ENCODE measurements at regions of chr10 and their contacts with region 1.

Region 1: DNA sequence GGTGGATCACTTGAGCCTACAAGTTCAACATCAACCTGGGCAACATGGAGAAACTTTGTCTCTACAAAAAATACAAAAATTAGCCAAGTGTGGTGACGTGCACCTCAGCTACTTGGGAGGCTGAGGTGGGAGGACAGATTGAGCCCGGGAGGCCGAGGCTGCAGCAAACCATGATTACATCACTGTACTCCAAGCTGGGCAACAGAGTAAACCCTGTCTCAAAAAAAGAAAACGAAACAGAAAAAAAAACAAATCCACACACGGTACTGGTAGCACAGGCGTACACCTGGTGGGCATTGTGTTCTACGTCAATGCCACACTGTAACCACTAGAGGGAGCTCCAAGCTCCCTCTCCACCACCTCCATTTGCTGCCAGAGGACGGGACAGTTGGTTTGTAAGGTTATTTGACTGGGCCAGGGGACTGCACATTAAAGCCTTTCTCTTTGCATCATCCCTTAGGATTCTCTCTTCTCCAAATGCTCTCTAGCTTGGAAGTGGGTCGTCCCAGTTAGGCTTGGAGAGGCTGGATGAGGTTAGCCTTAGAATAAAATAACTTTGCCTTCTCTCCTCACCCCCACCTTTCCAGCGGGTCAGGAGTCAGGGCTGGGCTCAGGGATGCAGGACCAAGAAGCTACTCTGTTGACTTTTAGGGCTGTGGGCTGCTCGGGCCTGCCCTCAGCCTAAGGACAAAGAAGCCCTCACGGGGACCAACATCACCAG is 130.8 kb downstream of the SORBS1 start:
- DNase-seq: peak; percentile 30
- ATAC-seq: peak; percentile 93
- H3K4me3 ChIP-seq: no peak overlapping the region
- H3K27ac ChIP-seq: no peak overlapping the region
- H3K4me1 ChIP-seq: peaks cover 7% of the 10 kb centered on the region
- H3K27me3 ChIP-seq: no peaks in the 10 kb centered on the region; a peak in 1 of 4 replicates
- CTCF ChIP-seq: peak; percentile 93 to 96 (median 93)
- EP300 ChIP-seq: no peak
- POLR2A ChIP-seq: no peak
- RAD21 ChIP-seq: peak; percentile 88

Region 2: DNA sequence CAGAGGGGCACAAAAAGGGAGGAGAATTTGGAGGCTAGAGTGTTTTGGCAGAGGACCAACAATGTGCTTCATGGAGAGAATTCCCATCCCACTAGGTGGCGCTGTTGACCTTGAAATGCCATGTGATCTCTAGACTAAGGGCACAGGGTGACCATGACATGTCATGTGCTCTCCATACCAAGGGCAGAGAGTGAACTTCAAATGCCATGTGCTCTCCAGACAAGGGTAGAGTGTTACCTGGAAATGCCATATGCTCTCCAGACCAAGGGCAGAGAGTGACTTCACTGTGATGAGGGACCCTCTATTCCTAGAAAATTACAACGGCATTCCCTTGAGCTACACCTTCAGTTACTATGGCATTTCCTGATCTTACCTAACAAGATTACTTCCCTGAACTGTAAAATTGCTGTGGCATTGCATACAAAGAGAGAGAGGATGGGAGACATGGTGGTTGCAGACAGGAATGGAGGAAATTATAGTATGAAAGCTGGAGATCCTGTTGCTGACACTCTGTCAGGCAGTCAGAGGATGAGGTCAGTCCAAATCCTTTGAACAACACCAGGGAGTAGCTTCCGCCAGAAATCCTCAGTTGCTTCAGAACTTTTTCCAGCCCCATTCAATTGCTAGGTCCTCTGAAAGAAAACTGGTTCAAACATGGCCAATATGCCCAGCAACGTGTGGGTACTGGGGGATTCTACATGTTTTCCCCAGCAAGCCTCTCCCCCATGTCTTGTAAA is 297.2 kb before region 1 on chr10:
- CTCF ChIA-PET with region 1: interaction called, 4 read pairs
- POLR2A ChIA-PET with region 1: no interaction called
- RAD21 ChIA-PET with region 1: no interaction called
- SMC1A ChIA-PET with region 1: no interaction called
- in situ Hi-C with region 1: no loop called
- intact Hi-C with region 1: loop called (anchors 1 kb)
- DNase-seq: peak; percentile 45
- ATAC-seq: peak; percentile 99
- H3K4me3 ChIP-seq: no peak overlapping the region
- H3K27ac ChIP-seq: no peak overlapping the region
- H3K4me1 ChIP-seq: no peaks in the 10 kb centered on the region
- H3K27me3 ChIP-seq: no peaks in the 10 kb centered on the region
- CTCF ChIP-seq: peak; percentile 71 to 83 (median 79)
- EP300 ChIP-seq: no peak
- POLR2A ChIP-seq: no peak
- RAD21 ChIP-seq: peak; percentile 86

Region 3: DNA sequence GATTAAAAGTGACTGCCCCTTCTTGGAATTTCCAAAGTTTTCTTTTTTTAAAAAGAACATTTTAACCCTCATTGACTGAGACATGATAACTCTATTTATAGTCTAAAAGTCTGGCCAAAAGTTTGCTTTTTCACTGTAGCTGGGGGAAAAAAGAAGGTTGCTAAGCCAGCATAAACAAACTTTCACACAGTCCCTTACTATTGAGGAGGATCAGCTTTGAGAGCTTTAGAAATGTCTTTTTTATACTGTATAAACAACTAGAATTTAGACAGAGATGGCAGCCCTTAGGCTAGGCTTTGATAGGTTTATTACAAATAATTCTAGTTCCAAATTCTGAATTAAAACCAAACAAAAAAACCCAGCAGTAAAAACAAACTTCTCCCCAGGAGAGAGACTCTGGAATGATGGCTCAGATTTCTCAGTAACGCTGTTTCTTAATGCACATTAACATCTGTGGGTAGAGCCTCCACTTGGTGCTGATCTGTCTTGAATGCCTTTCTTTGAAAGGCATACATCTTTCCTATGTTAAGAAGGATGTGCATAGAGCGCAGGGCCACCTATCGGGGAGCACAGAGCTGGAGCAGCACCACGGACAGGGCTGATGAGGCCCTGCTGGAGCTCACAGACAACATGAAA is 38.7 kb before region 1 on chr10:
- CTCF ChIA-PET with region 1: interaction called, 18 read pairs
- POLR2A ChIA-PET with region 1: interaction called, 6 read pairs
- RAD21 ChIA-PET with region 1: interaction called, 6 read pairs
- SMC1A ChIA-PET with region 1: interaction called, 6 read pairs
- in situ Hi-C with region 1: no loop called
- intact Hi-C with region 1: no loop called
- DNase-seq: no peak
- ATAC-seq: peak; percentile 32
- H3K4me3 ChIP-seq: no peak overlapping the region
- H3K27ac ChIP-seq: no peak overlapping the region
- H3K4me1 ChIP-seq: peaks cover 51% of the 10 kb centered on the region
- H3K27me3 ChIP-seq: no peaks in the 10 kb centered on the region
- CTCF ChIP-seq: peak in 2 of 3 experiments; percentile 3 to 18; a peak in 1 of 6 replicates
- EP300 ChIP-seq: no peak
- POLR2A ChIP-seq: no peak
- RAD21 ChIP-seq: no peak

Region 4: GRCh38 chr10:95406651-95407280 is 23.6 kb before region 1 on chr10:
- CTCF ChIA-PET with region 1: interaction called, 19 read pairs
- POLR2A ChIA-PET with region 1: interaction called, 5 read pairs
- RAD21 ChIA-PET with region 1: interaction called, 3 read pairs
- SMC1A ChIA-PET with region 1: interaction called, 4 read pairs
- in situ Hi-C with region 1: no loop called
- intact Hi-C with region 1: no loop called
- DNase-seq: no peak
- ATAC-seq: no peak
- H3K4me3 ChIP-seq: no peak overlapping the region
- H3K27ac ChIP-seq: no peak overlapping the region
- H3K4me1 ChIP-seq: no peaks in the 10 kb centered on the region
- H3K27me3 ChIP-seq: no peaks in the 10 kb centered on the region; a peak in 1 of 4 replicates
- CTCF ChIP-seq: no peak
- EP300 ChIP-seq: no peak
- POLR2A ChIP-seq: no peak
- RAD21 ChIP-seq: no peak

Region 5: GRCh38 chr10:95445837-95446486 is 15.6 kb after region 1 on chr10:
- CTCF ChIA-PET with region 1: interaction called, 147 read pairs
- POLR2A ChIA-PET with region 1: no interaction called
- RAD21 ChIA-PET with region 1: interaction called, 22 read pairs
- SMC1A ChIA-PET with region 1: interaction called, 70 read pairs
- in situ Hi-C with region 1: no loop called
- intact Hi-C with region 1: no loop called
- DNase-seq: no peak
- ATAC-seq: peak; percentile 83
- H3K4me3 ChIP-seq: no peak overlapping the region
- H3K27ac ChIP-seq: no peak overlapping the region
- H3K4me1 ChIP-seq: peaks cover 7% of the 10 kb centered on the region
- H3K27me3 ChIP-seq: no peaks in the 10 kb centered on the region; a peak in 2 of 4 replicates
- CTCF ChIP-seq: peak; percentile 85 to 86 (median 86)
- EP300 ChIP-seq: no peak
- POLR2A ChIP-seq: no peak
- RAD21 ChIP-seq: peak; percentile 77

Region 6: GRCh38 chr10:95601116-95601719 is 170.8 kb after region 1 on chr10:
- CTCF ChIA-PET with region 1: interaction called, 94 read pairs
- POLR2A ChIA-PET with region 1: interaction called, 3 read pairs
- RAD21 ChIA-PET with region 1: interaction called, 22 read pairs
- SMC1A ChIA-PET with region 1: interaction called, 28 read pairs
- in situ Hi-C with region 1: loop called (anchors 5 kb)
- intact Hi-C with region 1: loop called (anchors 1 kb)
- DNase-seq: peak; percentile 5
- ATAC-seq: peak; percentile 94
- H3K4me3 ChIP-seq: no peak overlapping the region
- H3K27ac ChIP-seq: no peak overlapping the region
- H3K4me1 ChIP-seq: no peaks in the 10 kb centered on the region
- H3K27me3 ChIP-seq: peaks cover 0 to 3% of the 10 kb centered on the region in 2 experiments; a peak in 2 of 4 replicates
- CTCF ChIP-seq: peak; percentile 92 to 95 (median 94)
- EP300 ChIP-seq: no peak
- POLR2A ChIP-seq: no peak
- RAD21 ChIP-seq: peak; percentile 95

Measured in GM12878 (cell line).